ENCODE measurements at regions of chr11 and their contacts with region 1.

Region 1: DNA sequence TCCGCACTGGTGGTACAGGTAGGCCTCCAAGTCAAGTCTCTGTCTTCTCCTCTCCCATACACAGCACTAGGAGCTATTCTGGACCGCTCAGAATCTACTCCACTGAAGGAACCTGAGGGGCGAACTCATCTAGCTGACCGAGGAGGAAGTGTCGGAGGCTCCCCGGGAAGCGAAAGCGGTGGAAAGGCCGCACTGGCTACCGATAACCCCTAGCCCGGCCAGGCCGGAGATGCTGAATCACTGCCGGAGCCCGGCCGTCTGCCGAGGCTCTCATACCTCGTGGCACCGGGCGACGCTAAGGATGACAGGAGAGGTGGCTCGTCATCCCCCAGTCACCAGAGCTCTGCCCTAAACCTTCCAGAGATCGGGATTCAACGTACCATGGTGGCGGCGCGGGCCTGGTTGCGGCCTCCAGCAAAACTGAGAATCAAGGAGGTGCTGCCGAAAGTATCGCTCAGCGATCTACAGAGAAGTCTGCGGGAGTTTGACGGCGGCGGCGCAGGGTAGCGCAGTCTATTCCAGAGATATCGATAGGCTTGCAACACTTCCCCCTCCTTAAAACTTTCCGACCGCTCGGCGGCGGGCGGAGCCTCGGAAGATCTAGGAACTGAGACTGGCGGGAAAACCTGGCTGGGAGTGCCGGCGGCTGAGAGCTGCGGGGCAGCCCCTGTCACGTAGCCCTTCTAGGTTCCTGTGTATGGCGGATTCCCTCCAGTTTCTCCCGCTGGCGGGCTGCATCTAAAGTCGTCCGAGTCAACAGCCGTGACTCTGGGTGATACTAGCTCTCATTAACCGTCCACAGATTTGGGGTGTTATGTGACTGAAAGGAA is at the start of gene PSMA1:
- DNase-seq: peak; percentile 94 to 96 (median 95)
- ATAC-seq: peak; percentile 98
- H3K4me3 ChIP-seq: peak within 1 kb of the TSS; percentile 55 to 99 (median 81)
- H3K27ac ChIP-seq: peak within 1 kb of the TSS; percentile 69 to 96 (median 88)
- H3K4me1 ChIP-seq: peaks cover 5 to 24% (median 15%) of the 10 kb centered on the region in 12 donors
- H3K27me3 ChIP-seq: no peaks in the 10 kb centered on the region
- CTCF ChIP-seq: peak in 11 of 12 donors; percentile 16 to 59 (median 43)
- POLR2A ChIP-seq: peak in 1 of 2 donors; percentile 77
- total RNA-seq, gene PSMA1: 95.5 to 136 (median 129) TPM

Region 2: DNA sequence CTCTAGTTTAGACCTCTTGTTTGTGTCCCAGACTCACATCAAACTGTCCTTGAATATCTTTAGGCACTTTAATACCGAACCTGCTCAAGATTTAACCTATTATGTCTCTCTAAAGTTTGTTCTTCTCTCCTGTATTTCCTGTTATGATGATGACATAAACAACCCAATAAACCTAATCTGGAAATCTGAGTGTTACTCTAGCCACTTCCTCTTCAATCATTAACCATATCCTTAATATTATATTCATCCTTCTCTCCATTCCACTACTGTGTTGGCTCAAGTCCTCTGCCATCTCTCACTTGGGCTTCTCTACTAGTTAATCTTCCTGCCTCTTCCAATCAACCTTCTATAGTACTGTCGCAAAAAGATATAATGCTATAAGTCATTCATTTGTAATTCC is 56.5 kb before region 1 on chr11:
- intact Hi-C with region 1: loop called in 1 of 10 experiments (anchors 10 kb)
- DNase-seq: no peak
- ATAC-seq: no peak
- H3K4me3 ChIP-seq: no peak overlapping the region
- H3K27ac ChIP-seq: no peak overlapping the region
- H3K4me1 ChIP-seq: peaks cover 0 to 10% (median 0%) of the 10 kb centered on the region in 12 donors
- H3K27me3 ChIP-seq: no peaks in the 10 kb centered on the region
- CTCF ChIP-seq: no peak
- POLR2A ChIP-seq: no peak

Region 3: DNA sequence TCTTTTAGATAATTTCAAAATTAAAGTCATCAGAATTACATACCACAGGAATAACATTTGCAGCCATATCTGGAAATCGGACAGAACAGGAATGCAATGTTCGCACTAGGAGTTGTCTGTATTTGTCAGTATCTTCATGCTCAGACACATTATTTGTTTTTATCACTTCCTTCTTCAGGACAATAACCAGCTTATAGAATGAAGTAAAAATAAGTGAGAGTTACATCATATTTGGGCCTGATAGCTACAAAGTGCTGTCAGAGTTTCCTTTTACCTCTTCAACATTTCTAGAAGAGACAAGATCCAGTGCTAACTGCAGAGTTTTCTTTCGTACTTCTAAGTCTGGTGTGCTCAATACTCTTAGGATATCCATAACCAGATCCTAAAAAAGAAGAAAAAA is 39.4 kb before region 1 on chr11:
- intact Hi-C with region 1: loop called in 1 of 10 experiments (anchors 2 kb)
- DNase-seq: no peak
- ATAC-seq: no peak
- H3K4me3 ChIP-seq: no peak overlapping the region
- H3K27ac ChIP-seq: no peak overlapping the region
- H3K4me1 ChIP-seq: no peaks in the 10 kb centered on the region
- H3K27me3 ChIP-seq: no peaks in the 10 kb centered on the region
- CTCF ChIP-seq: no peak
- POLR2A ChIP-seq: no peak

Region 4: DNA sequence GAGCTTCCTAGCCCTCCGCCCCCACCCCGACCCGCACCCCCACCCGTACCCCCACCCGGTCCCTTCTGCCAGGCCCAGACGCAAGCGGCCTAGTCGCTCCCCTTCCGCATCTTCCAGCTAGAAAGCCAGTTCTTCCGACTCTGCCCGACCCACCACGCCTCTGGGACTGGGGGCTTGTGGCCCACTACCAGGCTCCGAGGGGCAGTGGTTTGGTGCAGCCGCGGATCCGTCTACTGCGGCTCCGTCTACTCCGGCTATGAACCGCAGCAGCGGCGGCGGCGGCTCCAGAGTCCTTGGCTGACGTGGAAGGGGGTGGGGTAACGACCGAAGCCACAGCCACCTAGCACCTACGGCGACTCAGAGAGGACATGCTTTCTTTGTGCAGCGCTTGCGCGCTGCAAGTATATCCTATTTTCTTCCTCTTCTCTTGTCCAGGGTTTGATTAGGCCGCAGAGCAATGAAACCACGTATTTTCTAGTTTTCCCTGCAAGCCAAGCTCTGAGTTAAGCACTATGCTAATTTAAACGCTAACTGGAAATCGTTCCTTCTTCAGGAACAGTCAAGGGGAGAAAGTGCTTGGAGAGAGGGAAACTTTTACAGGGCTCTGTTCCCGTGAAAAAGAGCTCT is 20.5 kb before region 1 on chr11 and contains the start of gene COPB1:
- intact Hi-C with region 1: loop called in 1 of 10 experiments (anchors 2 kb)
- DNase-seq: peak; percentile 95
- ATAC-seq: peak; percentile 98 to 100 (median 99)
- H3K4me3 ChIP-seq: peak within 1 kb of the TSS; percentile 50 to 92 (median 78)
- H3K27ac ChIP-seq: peak within 1 kb of the TSS; percentile 72 to 95 (median 90)
- H3K4me1 ChIP-seq: peaks cover 0 to 36% (median 24%) of the 10 kb centered on the region in 12 donors
- H3K27me3 ChIP-seq: no peaks in the 10 kb centered on the region
- CTCF ChIP-seq: no peak
- POLR2A ChIP-seq: peak in 1 of 2 donors; percentile 84
- total RNA-seq, gene COPB1: 41.7 to 69.7 (median 51.3) TPM

Region 5: DNA sequence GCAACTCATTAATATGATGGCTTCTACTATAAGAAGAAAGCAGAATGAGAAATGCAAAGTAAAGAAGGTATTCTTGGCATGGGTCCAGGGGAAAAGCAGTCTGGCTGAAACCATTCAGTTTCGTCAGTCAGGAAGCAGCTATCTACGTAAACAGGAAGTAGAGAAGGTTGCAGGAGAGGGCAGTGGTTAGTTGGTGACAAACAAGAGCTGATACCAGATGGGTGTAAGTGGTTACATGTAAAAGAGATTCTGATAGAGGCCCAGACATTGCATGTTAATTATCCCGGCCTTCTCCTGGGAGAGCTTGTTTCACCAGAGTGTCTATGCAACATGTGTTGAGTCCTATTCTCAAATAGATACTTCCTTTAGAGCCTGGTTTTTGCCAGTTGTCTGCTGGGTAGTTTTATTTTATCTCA is 58.4 kb after region 1 on chr11:
- intact Hi-C with region 1: no loop called
- DNase-seq: peak in 2 of 5 donors; percentile 25 to 32
- ATAC-seq: peak; percentile 34 to 87 (median 68)
- H3K4me3 ChIP-seq: no peak overlapping the region
- H3K27ac ChIP-seq: peak overlapping the region in 4 of 12 donors; percentile 2 to 65 (median 11)
- H3K4me1 ChIP-seq: peaks cover 0 to 25% (median 4%) of the 10 kb centered on the region in 12 donors
- H3K27me3 ChIP-seq: no peaks in the 10 kb centered on the region
- CTCF ChIP-seq: no peak
- POLR2A ChIP-seq: no peak

Measured in heart left ventricle (tissue), 16 donors.